ENCODE measurements at regions of chr12 and their contacts with region 1.

Region 1: GRCh38 chr12:78002878-78003277 is 172.2 kb downstream of the NAV3 start:
- DNase-seq: no peak
- ATAC-seq: no peak
- H3K4me3 Mint-ChIP-seq: no peak overlapping the region
- H3K27ac Mint-ChIP-seq: no peak overlapping the region
- H3K4me1 Mint-ChIP-seq: peaks cover 20% of the 10 kb centered on the region
- H3K27me3 Mint-ChIP-seq: no peaks in the 10 kb centered on the region
- CTCF ChIP-seq: no peak

Region 2: DNA sequence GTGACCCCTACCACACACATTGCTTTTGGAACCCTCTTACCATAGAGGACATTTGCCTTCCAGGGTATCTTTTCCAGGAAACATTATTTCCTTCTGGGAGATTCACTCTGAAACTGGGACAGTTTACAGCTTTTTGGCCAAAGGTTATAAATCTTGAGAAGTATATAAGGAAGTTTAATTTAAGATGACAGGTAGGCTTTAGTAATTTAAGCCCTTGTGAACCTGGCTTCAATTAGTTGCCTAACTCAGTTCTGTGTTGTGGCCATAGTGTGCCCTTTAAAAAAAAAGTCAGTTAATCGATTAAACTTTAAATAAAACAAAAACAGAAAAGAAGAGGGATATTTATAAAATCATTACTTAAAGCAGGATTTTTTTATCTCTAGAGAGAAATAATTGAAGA is 29.3 kb before region 1 on chr12:
- CTCF ChIA-PET with region 1: no interaction called
- POLR2A ChIA-PET with region 1: no interaction called
- intact Hi-C with region 1: no loop called
- DNase-seq: no peak
- ATAC-seq: no peak
- H3K4me3 Mint-ChIP-seq: no peak overlapping the region
- H3K27ac Mint-ChIP-seq: no peak overlapping the region
- H3K4me1 Mint-ChIP-seq: no peaks in the 10 kb centered on the region
- H3K27me3 Mint-ChIP-seq: no peaks in the 10 kb centered on the region
- CTCF ChIP-seq: no peak

Region 3: DNA sequence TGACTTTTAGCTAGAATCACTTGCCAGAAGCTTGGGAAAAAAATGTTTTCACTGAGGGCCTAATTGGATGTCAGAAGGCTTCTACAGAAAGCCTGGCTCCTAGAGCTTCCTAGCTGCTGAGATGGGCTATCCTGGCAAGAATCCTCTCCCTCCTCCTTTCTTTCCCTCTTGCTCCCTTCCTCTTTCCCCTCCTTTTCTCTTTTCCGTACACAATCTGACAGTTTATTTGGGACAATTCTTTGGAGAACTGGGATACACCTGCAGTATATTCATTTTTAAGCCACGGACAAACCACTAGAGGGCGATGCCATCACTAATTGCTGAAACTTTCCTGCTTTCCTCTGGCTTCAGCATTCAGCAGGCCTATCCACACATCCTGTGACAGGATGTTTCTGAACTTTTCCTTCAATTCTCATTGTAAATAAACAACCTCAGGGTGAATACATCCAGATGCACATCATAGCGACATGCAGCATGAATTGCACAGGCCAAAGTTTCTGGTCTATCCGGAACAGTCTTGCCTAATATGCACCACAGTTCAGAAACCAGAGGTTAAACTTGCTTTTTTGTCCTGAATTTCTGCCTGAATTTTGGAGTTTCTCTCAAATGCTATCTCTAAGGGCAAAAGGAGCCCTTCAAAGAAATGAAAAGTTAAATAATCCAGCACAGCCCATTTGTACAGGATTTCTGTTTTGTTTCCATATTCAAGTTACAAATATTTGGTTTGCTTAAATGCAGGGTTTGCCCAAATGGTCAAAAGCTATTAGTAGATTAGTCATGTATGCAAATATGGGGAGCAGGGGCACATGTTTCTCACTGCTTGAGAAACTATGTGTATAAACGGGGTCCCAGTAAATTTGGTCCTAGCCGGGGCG is 1545.1 kb after region 1 on chr12:
- CTCF ChIA-PET with region 1: no interaction called
- POLR2A ChIA-PET with region 1: no interaction called
- intact Hi-C with region 1: loop called (anchors 5 kb)
- DNase-seq: no peak
- ATAC-seq: no peak
- H3K4me3 Mint-ChIP-seq: no peak overlapping the region
- H3K27ac Mint-ChIP-seq: no peak overlapping the region
- H3K4me1 Mint-ChIP-seq: no peaks in the 10 kb centered on the region
- H3K27me3 Mint-ChIP-seq: no peaks in the 10 kb centered on the region
- CTCF ChIP-seq: peak; percentile 29

Measured in activated B cell treated with CpG ODN at 0.5 μM for 24 hours (primary cell).